ENCODE measurements at regions of chr2 and their contacts with region 1.

Region 1: GRCh38 chr2:58227171-58227917 is 13.8 kb downstream of the FANCL start:
- DNase-seq: no peak
- H3K4me3 ChIP-seq: no peak overlapping the region
- H3K27ac ChIP-seq: no peak overlapping the region
- H3K4me1 ChIP-seq: no peaks in the 10 kb centered on the region
- H3K27me3 ChIP-seq: no peaks in the 10 kb centered on the region
- CTCF ChIP-seq: no peak
- EP300 ChIP-seq: no peak
- POLR2A ChIP-seq: no peak

Region 2: GRCh38 chr2:58137221-58137620 is 90.1 kb before region 1 on chr2:
- intact Hi-C with region 1: no loop called
- DNase-seq: no peak
- H3K4me3 ChIP-seq: no peak overlapping the region
- H3K27ac ChIP-seq: no peak overlapping the region
- H3K4me1 ChIP-seq: no peaks in the 10 kb centered on the region
- H3K27me3 ChIP-seq: no peaks in the 10 kb centered on the region
- CTCF ChIP-seq: no peak
- EP300 ChIP-seq: no peak
- POLR2A ChIP-seq: no peak

Region 3: GRCh38 chr2:58204195-58204959 is 23.0 kb before region 1 on chr2:
- intact Hi-C with region 1: loop called in 1 of 4 experiments (anchors 2 kb)
- DNase-seq: no peak
- H3K4me3 ChIP-seq: no peak overlapping the region
- H3K27ac ChIP-seq: no peak overlapping the region
- H3K4me1 ChIP-seq: no peaks in the 10 kb centered on the region
- H3K27me3 ChIP-seq: no peaks in the 10 kb centered on the region
- CTCF ChIP-seq: no peak
- EP300 ChIP-seq: no peak
- POLR2A ChIP-seq: no peak

Region 4: DNA sequence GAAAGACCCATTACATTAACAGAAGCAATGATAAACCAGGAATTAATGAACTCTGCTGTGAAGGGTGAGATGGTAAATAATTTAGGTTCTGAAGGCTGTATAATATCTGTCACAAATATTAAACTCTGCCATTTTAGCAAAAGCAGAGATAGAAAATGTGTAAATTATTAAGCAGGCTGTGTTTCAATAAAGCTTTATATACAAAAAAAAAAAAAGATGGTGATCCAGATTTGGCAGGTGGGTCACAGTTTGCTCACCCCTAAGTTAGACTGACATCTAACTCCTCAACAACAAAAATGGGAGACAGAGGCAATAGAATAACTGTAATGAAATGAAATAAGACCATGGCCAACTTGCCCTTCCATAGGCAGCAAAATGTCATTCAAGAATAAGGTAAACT is 171.1 kb after region 1 on chr2:
- intact Hi-C with region 1: no loop called
- DNase-seq: no peak
- H3K4me3 ChIP-seq: no peak overlapping the region
- H3K27ac ChIP-seq: no peak overlapping the region
- H3K4me1 ChIP-seq: no peaks in the 10 kb centered on the region
- H3K27me3 ChIP-seq: no peaks in the 10 kb centered on the region
- CTCF ChIP-seq: no peak
- EP300 ChIP-seq: no peak
- POLR2A ChIP-seq: no peak

Measured in ovary (tissue), 10 donors.